B cell (primary cell): ENCODE measurements at regions of chr6 and their contacts with region 1.

Region 1: DNA sequence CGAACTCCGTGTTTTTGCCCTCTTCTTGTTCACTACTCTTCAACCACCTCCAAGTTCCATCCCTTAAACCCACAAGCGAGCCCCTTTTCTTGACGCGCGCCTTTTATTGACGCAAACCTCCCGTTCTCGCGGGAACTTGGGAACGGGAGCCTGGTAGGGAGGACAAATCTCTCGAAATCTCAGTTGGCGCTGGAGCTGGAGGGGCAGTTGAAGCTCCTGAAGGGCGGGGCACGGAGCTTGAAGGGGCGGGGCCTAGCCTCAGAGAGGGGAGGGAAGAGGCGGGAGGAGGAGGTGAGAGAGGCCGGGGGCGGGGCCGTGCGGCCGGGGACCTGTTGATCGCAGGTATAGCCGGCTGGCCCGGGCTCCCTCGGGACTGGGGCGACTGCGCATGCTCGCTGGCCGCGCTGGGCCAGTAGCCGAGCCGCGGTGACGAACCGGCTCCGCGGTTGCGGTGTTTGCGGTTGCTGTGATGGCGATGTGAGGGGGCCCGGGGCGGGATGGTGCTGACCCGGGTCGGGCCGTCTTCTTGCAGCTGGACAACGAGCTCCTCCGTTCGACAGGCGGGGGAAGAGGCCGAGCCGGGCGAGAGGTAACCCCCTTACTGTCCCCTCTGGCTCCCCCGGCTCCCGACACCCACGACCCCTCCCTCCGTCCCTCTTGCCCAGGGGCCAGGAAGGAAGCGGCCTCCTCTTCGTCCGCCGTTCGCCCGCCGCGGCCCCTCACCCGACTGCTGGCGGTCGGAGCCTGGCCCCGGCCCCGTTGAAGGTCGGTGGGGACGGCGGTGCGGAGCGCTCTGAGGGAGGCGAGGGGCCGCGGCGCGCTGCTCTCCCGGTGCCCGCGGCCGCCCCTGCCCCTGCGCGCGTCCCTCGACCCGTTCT is at the start of gene FAM135A:
- DNase-seq: peak; percentile 97
- ATAC-seq: peak; percentile 98
- H3K4me3 ChIP-seq: peak within 1 kb of the TSS; percentile 71 to 88 (median 79)
- H3K4me3 Mint-ChIP-seq: peak within 1 kb of the TSS; percentile 97
- H3K27ac ChIP-seq: peak within 1 kb of the TSS; percentile 67 to 76
- H3K27ac Mint-ChIP-seq: peak within 1 kb of the TSS; percentile 87
- H3K4me1 ChIP-seq: peaks cover 7 to 17% of the 10 kb centered on the region in 2 donors
- H3K4me1 Mint-ChIP-seq: peaks cover 23% of the 10 kb centered on the region
- H3K27me3 ChIP-seq: no peaks in the 10 kb centered on the region
- H3K27me3 Mint-ChIP-seq: no peaks in the 10 kb centered on the region
- CTCF ChIP-seq: no peak
- total RNA-seq, gene FAM135A: 28.9 and 30.6 TPM in 2 replicates

Region 2: DNA sequence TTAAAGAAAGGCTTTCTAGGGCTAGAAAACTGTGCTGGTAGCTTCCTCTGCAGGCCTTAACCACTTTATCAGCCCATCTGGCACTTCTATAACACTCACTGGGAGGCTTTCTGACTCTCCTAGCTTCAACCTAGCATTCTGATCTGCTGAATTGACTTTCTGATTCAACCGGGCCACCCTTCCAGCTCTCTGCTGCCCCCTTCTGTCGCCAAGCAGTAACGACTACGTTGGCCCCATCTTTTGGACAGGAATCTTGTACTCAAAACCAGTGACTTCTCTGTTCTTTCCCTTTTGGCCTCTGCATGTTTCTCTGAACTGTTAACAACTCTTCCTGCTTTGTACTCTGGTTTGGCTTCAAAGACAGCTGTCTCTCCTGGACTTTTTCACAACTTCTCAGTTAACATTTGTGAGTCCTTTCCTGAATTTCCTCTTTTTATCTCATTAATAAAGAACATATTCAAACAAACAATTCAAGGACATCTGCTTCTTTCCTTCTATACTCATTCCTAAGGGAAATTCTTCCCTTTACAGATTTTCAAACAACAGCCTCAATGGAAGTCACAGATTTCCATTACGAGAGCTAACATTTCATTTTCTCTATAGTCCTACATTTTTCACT is 43.9 kb before region 1 on chr6:
- CTCF ChIA-PET with region 1: interaction called, 10 read pairs
- POLR2A ChIA-PET with region 1: no interaction called
- intact Hi-C with region 1: loop called (anchors 1 kb)
- DNase-seq: peak; percentile 73
- ATAC-seq: peak; percentile 78
- H3K4me3 ChIP-seq: no peak overlapping the region
- H3K4me3 Mint-ChIP-seq: no peak overlapping the region
- H3K27ac ChIP-seq: no peak overlapping the region
- H3K27ac Mint-ChIP-seq: no peak overlapping the region
- H3K4me1 ChIP-seq: no peaks in the 10 kb centered on the region
- H3K4me1 Mint-ChIP-seq: peaks cover 4% of the 10 kb centered on the region
- H3K27me3 ChIP-seq: peaks cover 0 to 2% (median 0%) of the 10 kb centered on the region in 4 experiments
- H3K27me3 Mint-ChIP-seq: peaks cover 32% of the 10 kb centered on the region
- CTCF ChIP-seq: peak; percentile 84

Region 3: GRCh38 chr6:70520575-70520974 is 107.2 kb after region 1 on chr6:
- CTCF ChIA-PET with region 1: no interaction called
- POLR2A ChIA-PET with region 1: interaction called, 10 read pairs
- intact Hi-C with region 1: no loop called
- DNase-seq: peak; percentile 22
- ATAC-seq: no peak
- H3K4me3 ChIP-seq: no peak overlapping the region
- H3K4me3 Mint-ChIP-seq: no peak overlapping the region
- H3K27ac ChIP-seq: no peak overlapping the region
- H3K27ac Mint-ChIP-seq: no peak overlapping the region
- H3K4me1 ChIP-seq: no peaks in the 10 kb centered on the region
- H3K4me1 Mint-ChIP-seq: no peaks in the 10 kb centered on the region
- H3K27me3 ChIP-seq: no peaks in the 10 kb centered on the region
- H3K27me3 Mint-ChIP-seq: no peaks in the 10 kb centered on the region
- CTCF ChIP-seq: peak; percentile 64

Region 4: GRCh38 chr6:70566751-70567382 is 153.5 kb after region 1 on chr6 and contains the start of gene SDHAF4:
- CTCF ChIA-PET with region 1: no interaction called
- POLR2A ChIA-PET with region 1: interaction called, 3 read pairs
- intact Hi-C with region 1: loop called (anchors 1 kb)
- DNase-seq: peak; percentile 94
- ATAC-seq: peak; percentile 99
- H3K4me3 ChIP-seq: peak within 1 kb of the TSS; percentile 72 to 91 (median 83)
- H3K4me3 Mint-ChIP-seq: peak within 1 kb of the TSS; percentile 93
- H3K27ac ChIP-seq: peak within 1 kb of the TSS; percentile 73 to 84
- H3K27ac Mint-ChIP-seq: peak within 1 kb of the TSS; percentile 83
- H3K4me1 ChIP-seq: peaks cover 5 to 12% of the 10 kb centered on the region in 2 donors
- H3K4me1 Mint-ChIP-seq: peaks cover 19% of the 10 kb centered on the region
- H3K27me3 ChIP-seq: no peaks in the 10 kb centered on the region
- H3K27me3 Mint-ChIP-seq: no peaks in the 10 kb centered on the region
- CTCF ChIP-seq: no peak
- total RNA-seq, gene SDHAF4: 9.1 and 15.4 TPM in 2 replicates

Region 5: DNA sequence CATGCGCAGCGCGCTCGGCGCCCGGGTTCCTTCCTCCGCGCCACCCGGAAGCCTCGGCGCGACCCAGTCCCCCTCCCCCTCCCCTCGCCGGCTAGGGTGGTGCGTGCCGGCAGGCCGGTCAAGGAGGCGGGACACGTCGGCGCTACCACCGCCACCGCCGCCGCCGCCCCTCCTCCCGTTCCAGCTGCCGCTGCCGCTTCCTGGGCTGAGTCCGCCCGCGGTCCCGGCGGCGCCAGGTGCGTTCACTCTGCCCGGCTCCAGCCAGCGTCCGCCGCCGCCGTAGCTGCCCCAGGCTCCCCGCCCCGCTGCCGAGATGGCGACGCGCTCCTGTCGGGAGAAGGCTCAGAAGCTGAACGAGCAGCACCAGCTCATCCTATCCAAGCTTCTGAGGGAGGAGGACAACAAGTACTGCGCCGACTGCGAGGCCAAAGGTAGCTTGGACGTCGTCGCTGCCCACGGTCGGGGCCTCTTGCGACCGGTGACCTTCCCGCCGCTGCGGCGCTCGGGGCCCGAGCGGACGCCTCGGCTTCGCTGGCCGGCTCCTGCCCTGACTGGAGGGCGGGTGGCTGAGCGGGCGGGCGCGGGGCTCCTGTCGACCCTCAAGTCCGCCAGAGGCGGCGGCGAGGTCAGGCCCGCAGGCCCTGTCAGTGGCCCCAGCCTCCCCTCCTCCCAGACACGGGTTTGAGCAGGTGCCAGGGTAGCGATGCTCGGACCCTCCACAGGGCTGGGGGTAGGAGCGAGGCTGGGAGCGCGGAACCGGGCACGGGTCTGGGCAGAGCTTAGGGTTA is 254.6 kb after region 1 on chr6 and contains the start of gene SMAP1:
- CTCF ChIA-PET with region 1: interaction called, 5 read pairs
- POLR2A ChIA-PET with region 1: no interaction called
- intact Hi-C with region 1: loop called (anchors 1 kb)
- DNase-seq: peak; percentile 95
- ATAC-seq: peak; percentile 97
- H3K4me3 ChIP-seq: peak within 1 kb of the TSS; percentile 69 to 92 (median 82)
- H3K4me3 Mint-ChIP-seq: peak within 1 kb of the TSS; percentile 90
- H3K27ac ChIP-seq: peak within 1 kb of the TSS; percentile 60 to 83
- H3K27ac Mint-ChIP-seq: peak within 1 kb of the TSS; percentile 93
- H3K4me1 ChIP-seq: peaks cover 17 to 23% of the 10 kb centered on the region in 2 donors
- H3K4me1 Mint-ChIP-seq: peaks cover 37% of the 10 kb centered on the region
- H3K27me3 ChIP-seq: no peaks in the 10 kb centered on the region
- H3K27me3 Mint-ChIP-seq: peaks cover 6% of the 10 kb centered on the region
- CTCF ChIP-seq: no peak
- total RNA-seq, gene SMAP1: 19.7 and 21.7 TPM in 2 replicates